ENCODE measurements at regions of chr20 and their contacts with region 1.

Region 1: DNA sequence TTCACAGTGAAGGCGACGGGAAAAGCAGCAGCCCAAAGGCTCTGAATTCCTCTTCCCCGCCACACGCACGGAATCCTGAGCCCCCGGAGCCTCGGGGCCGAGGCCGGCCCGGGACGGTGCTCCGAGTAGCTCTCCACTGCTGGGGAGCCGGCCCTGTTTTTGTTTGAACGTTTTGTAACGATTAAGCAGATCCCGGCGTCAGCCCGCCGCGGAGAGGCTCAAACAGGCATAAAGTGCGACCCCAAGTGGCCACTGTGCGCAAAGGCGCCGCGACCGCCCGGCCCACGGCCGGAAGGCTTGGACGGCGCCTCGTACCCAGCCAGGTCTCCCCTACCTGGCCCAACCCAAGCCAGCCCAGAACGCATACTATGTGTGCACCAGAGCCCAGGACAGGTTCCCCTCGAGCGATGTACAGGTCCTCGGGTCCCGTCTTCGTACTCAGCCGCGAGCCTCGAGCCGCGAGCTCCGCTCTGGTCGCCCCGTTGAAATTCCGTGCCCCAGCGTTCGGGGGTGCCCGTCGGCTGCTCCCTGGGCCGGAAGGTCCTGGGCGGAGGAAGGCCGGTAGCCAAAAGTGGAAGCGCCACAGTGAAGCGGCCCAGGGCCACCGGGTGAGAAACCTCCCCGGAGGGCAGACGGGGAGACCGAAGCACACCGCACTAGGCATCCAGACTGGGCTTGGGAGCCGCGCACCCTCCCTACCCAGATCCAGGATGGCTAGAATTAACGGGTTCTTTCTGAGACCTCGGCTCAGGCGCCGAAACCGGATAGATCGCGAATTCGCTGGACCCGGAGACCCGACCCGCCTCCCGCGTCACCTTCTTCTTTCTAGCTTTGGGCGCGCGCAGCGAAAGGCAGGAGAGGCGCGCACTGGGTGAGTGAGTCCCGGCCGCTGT is 1.2 kb upstream of the MAFB start:
- DNase-seq: peak; percentile 64
- H3K4me3 Mint-ChIP-seq: peak overlapping the region; percentile 66
- H3K27ac Mint-ChIP-seq: peak overlapping the region; percentile 70
- H3K4me1 Mint-ChIP-seq: no peaks in the 10 kb centered on the region
- H3K27me3 Mint-ChIP-seq: peaks cover 81% of the 10 kb centered on the region

Region 2: GRCh38 chr20:39885975-39886649 is 804.1 kb before region 1 on chr20:
- intact Hi-C with region 1: loop called (anchors 10 kb)
- DNase-seq: no peak
- H3K4me3 Mint-ChIP-seq: no peak overlapping the region
- H3K27ac Mint-ChIP-seq: no peak overlapping the region
- H3K4me1 Mint-ChIP-seq: no peaks in the 10 kb centered on the region
- H3K27me3 Mint-ChIP-seq: no peaks in the 10 kb centered on the region

Region 3: DNA sequence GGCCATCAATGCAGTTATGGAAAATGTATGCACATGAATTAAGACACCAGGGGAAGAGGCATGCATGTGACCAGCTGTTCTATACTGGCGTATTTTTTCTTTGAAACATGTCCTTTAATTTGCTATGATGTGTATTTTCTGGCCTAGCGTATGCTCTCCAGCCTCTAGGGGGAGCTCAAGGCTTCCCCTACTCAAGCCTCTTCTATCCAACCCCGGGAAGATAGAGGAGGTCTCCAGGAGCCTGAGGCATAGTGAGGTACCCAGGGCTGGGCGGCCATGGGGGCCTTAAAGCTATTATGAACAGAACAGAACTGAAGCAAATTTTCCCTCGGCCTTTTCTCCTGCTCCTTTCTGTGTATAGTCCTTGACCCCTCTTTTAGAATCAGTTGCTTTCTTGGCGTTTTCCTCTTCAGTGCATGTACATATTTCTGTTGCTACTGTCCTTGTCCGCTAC is 530.1 kb before region 1 on chr20:
- intact Hi-C with region 1: loop called (anchors 5 kb)
- DNase-seq: peak; percentile 1
- H3K4me3 Mint-ChIP-seq: no peak overlapping the region
- H3K27ac Mint-ChIP-seq: no peak overlapping the region
- H3K4me1 Mint-ChIP-seq: no peaks in the 10 kb centered on the region
- H3K27me3 Mint-ChIP-seq: no peaks in the 10 kb centered on the region

Region 4: DNA sequence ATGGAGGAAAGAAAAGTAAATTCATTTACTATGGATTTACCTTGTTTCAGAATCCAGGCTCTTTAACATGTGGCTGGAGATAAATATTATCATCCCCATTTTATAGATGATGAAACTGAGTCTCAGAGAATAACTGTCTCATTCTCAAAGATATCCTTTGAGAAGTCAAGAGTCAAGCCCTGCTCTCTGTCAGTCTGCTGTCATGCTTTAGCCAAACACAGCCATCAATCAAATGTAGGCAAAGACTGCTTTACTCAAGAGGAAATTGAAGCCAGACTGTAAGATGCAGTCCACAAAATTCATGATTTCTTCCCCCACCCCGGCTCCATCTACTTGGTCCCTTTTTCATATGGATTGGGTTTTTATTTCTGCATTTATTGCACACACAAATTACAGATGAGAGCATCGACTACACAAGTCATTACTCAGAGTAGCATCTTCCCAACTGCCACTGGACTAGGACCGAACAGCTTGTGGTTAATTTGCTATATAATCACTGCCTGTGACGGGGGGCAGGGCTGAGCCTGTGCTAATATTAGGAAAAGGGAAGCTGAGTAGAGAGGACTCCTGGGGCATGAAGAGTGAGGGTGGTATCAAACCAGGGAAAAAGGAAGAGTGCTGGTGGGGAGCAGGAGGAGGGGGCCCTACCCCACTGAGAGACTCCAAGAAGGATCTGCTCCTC is 235.8 kb after region 1 on chr20:
- intact Hi-C with region 1: no loop called
- DNase-seq: no peak
- H3K4me3 Mint-ChIP-seq: no peak overlapping the region
- H3K27ac Mint-ChIP-seq: no peak overlapping the region
- H3K4me1 Mint-ChIP-seq: no peaks in the 10 kb centered on the region
- H3K27me3 Mint-ChIP-seq: peaks cover 16% of the 10 kb centered on the region